Panc1 (cell line): ENCODE measurements at regions of chr19 and their contacts with region 1.

Region 1: GRCh38 chr19:56176881-56177280 is 1.1 kb downstream of the GALP start:
- DNase-seq: no peak
- ATAC-seq: no peak
- H3K4me3 ChIP-seq: no peak overlapping the region
- H3K27ac ChIP-seq: no peak overlapping the region
- H3K4me1 ChIP-seq: no peaks in the 10 kb centered on the region
- H3K27me3 ChIP-seq: no peaks in the 10 kb centered on the region
- CTCF ChIP-seq: no peak

Region 2: DNA sequence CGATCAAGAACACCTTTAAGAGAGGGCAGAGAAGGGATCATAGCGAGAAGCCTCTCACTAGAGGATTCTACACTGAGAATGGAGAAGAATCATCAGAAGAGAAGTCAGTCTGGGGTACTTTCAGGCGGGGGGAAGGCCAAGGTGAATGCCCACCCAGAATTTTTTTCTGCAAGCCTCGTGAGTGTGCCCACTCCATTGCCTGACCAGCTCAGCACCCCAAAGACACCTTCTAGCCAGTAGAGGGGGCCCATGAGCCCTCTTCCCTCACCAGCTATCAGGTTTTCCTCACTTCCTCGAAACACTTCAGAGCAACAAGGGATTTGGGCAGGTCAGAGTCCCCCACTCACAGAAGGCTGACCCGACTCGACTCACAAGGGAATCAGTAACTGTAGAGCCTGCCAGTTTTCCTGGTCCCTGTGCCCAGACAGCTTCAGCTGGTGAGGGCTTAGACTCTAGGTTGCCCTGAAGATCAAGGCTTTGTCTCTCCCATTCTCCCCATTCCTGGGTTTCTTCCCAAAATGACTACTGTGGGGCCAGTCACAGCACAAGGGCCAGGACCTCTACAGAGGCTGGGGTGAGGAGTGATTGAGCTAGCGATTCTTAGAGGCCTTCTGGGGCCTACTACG is 263.1 kb before region 1 on chr19:
- CTCF ChIA-PET with region 1: no interaction called
- POLR2A ChIA-PET with region 1: interaction called, 11 read pairs
- in situ Hi-C with region 1: no loop called
- intact Hi-C with region 1: no loop called
- DNase-seq: no peak
- ATAC-seq: peak; percentile 78; the same call in 1 of the 2 replicates
- H3K4me3 ChIP-seq: no peak overlapping the region
- H3K27ac ChIP-seq: no peak overlapping the region
- H3K4me1 ChIP-seq: no peaks in the 10 kb centered on the region
- H3K27me3 ChIP-seq: peaks cover 21% of the 10 kb centered on the region
- CTCF ChIP-seq: peak; percentile 86

Region 3: DNA sequence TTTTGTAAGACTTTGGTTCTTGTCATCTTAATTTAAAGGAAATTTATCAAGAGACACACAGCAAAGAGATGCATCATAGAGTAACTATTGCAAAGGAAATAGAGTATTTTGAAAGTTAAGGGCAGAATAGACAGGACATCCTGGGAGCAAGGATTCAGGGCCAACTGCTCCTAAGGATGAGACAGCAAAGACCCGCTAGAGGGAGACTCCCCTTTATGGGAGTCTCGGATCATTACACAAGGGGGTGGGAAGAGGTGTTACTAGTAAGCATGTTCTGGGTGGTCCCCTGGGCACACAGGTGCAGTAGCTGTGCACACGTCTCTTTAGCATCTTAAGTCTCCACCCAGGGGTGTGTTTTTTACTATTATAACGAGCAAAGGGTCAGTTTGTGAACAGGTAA is 34.8 kb after region 1 on chr19:
- CTCF ChIA-PET with region 1: no interaction called
- POLR2A ChIA-PET with region 1: no interaction called
- in situ Hi-C with region 1: no loop called
- intact Hi-C with region 1: no loop called
- DNase-seq: no peak
- ATAC-seq: no peak
- H3K4me3 ChIP-seq: no peak overlapping the region
- H3K27ac ChIP-seq: no peak overlapping the region
- H3K4me1 ChIP-seq: no peaks in the 10 kb centered on the region
- H3K27me3 ChIP-seq: no peaks in the 10 kb centered on the region
- CTCF ChIP-seq: no peak; the same call in 1 of the 2 replicates

Region 4: DNA sequence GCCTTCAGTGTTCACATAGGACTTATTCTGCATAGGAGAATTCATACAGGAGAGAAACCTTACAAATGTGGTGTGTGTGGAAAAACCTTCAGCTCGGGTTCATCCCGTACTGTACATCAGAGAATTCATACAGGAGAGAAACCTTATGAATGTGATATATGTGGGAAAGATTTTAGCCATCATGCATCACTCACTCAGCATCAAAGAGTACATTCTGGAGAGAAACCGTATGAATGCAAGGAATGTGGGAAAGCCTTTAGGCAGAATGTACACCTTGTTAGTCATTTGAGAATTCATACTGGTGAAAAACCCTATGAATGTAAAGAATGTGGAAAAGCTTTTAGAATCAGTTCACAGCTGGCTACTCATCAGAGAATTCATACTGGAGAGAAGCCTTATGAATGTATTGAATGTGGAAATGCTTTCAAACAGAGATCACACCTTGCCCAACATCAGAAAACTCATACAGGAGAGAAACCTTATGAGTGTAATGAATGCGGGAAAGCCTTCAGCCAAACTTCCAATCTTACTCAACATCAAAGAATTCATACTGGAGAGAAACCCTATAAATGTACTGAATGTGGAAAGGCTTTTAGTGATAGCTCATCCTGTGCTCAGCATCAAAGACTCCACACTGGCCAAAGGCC is 348.5 kb after region 1 on chr19:
- CTCF ChIA-PET with region 1: no interaction called
- POLR2A ChIA-PET with region 1: no interaction called
- in situ Hi-C with region 1: no loop called
- intact Hi-C with region 1: no loop called
- DNase-seq: no peak
- ATAC-seq: no peak
- H3K4me3 ChIP-seq: no peak overlapping the region
- H3K27ac ChIP-seq: no peak overlapping the region
- H3K4me1 ChIP-seq: no peaks in the 10 kb centered on the region
- H3K27me3 ChIP-seq: no peaks in the 10 kb centered on the region
- CTCF ChIP-seq: no peak